Activated CD8-positive, alpha-beta T cell treated with anti-CD3 and anti-CD28 coated beads, Interleukin-2, amount 10 ng/mL, durations not matched to agents 7 days and 5 days (primary cell): ENCODE measurements at regions of chr12 and their contacts with region 1.

Region 1: DNA sequence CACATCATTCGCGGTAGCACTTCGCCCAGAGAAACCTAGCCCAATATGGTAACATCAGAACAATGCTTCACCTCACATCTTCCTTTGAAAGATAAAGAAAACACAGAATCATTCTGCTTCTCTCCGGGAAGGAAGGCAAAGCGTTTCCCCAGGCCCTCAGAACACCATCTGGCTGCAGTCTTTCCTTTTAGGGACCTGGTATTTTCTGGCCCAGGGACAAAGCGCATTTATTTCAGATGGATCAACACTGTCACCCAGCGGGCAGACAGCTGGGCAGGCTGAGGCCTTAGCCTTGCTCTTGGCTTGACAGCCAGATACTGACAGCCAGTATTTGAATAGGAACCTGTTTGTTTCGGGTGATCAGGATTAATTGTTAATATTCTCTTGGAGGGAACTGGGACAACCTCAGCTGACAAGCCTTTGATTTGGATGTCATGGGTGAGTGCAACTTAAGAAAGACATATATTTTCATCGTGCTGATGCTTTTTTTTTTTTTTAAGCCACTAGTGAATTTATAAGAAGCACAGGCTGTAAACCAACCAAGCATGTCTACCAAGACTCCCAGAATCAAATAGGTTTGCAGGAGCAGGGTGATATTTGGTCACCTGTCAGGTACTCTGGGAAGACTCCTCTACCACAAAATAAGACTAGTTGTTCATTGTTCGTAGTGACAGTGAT is 118.9 kb downstream of the VEZT start:
- DNase-seq: no peak
- ATAC-seq: no peak
- H3K4me3 Mint-ChIP-seq: no peak overlapping the region
- H3K27ac Mint-ChIP-seq: no peak overlapping the region
- H3K4me1 Mint-ChIP-seq: peaks cover 5% of the 10 kb centered on the region
- H3K27me3 Mint-ChIP-seq: no peaks in the 10 kb centered on the region

Region 2: GRCh38 chr12:95117178-95117599 is 219.3 kb before region 1 on chr12:
- CTCF ChIA-PET with region 1: interaction called, 11 read pairs
- POLR2A ChIA-PET with region 1: no interaction called
- DNase-seq: peak; percentile 70
- ATAC-seq: peak; percentile 86
- H3K4me3 Mint-ChIP-seq: no peak overlapping the region
- H3K27ac Mint-ChIP-seq: no peak overlapping the region
- H3K4me1 Mint-ChIP-seq: peaks cover 5% of the 10 kb centered on the region
- H3K27me3 Mint-ChIP-seq: peaks cover 3% of the 10 kb centered on the region

Region 3: GRCh38 chr12:95465275-95465674 is 128.7 kb after region 1 on chr12:
- CTCF ChIA-PET with region 1: no interaction called
- POLR2A ChIA-PET with region 1: no interaction called
- DNase-seq: no peak
- ATAC-seq: no peak
- H3K4me3 Mint-ChIP-seq: no peak overlapping the region
- H3K27ac Mint-ChIP-seq: no peak overlapping the region
- H3K4me1 Mint-ChIP-seq: no peaks in the 10 kb centered on the region
- H3K27me3 Mint-ChIP-seq: no peaks in the 10 kb centered on the region